WTC11 (cell line): ENCODE measurements at regions of chr21 and their contacts with region 1.

Region 1: GRCh38 chr21:34534522-34534921 is 22.5 kb upstream of the KCNE1 start:
- DNase-seq: no peak
- ATAC-seq: no peak
- H3K4me3 Mint-ChIP-seq: no peak overlapping the region
- H3K27ac Mint-ChIP-seq: no peak overlapping the region
- H3K4me1 Mint-ChIP-seq: peaks cover 4% of the 10 kb centered on the region
- H3K27me3 Mint-ChIP-seq: no peaks in the 10 kb centered on the region
- CTCF ChIP-seq: no peak

Region 2: GRCh38 chr21:34670962-34671348 is 136.4 kb after region 1 on chr21:
- CTCF ChIA-PET with region 1: no interaction called
- POLR2A ChIA-PET with region 1: interaction called, 14 read pairs
- DNase-seq: no peak
- ATAC-seq: 0 out of 2 replicates have a peak, but pooled peaks have one; percentile 3
- H3K4me3 Mint-ChIP-seq: peak overlapping the region; percentile 85
- H3K27ac Mint-ChIP-seq: no peak overlapping the region
- H3K4me1 Mint-ChIP-seq: peaks cover 25% of the 10 kb centered on the region
- H3K27me3 Mint-ChIP-seq: peaks cover 68% of the 10 kb centered on the region
- CTCF ChIP-seq: no peak